ENCODE measurements at regions of chr14 and their contacts with region 1.

Region 1: GRCh38 chr14:31207755-31208545 is at the start of gene HECTD1:
- DNase-seq: peak; percentile 93
- ATAC-seq: peak; percentile 86
- H3K4me3 ChIP-seq: peak within 1 kb of the TSS; percentile 89 to 96 (median 95)
- H3K27ac ChIP-seq: peak within 1 kb of the TSS; percentile 94
- H3K4me1 ChIP-seq: peaks cover 35% of the 10 kb centered on the region
- H3K27me3 ChIP-seq: no peaks in the 10 kb centered on the region; a peak in 1 of 5 replicates
- CTCF ChIP-seq: peak; percentile 87
- EP300 ChIP-seq: peak; percentile 52 to 68
- POLR2A ChIP-seq: peak in 1 of 2 experiments; percentile 97; a peak in 2 of 4 replicates
- RAD21 ChIP-seq: peak; percentile 100
- total RNA-seq, gene HECTD1: 560 and 761 TPM in 2 replicates

Region 2: GRCh38 chr14:31154956-31155355 is 53.0 kb before region 1 on chr14:
- CTCF ChIA-PET with region 1: no interaction called
- POLR2A ChIA-PET with region 1: no interaction called
- in situ Hi-C with region 1: no loop called
- intact Hi-C with region 1: no loop called
- DNase-seq: no peak
- ATAC-seq: no peak
- H3K4me3 ChIP-seq: no peak overlapping the region
- H3K27ac ChIP-seq: no peak overlapping the region
- H3K4me1 ChIP-seq: no peaks in the 10 kb centered on the region
- H3K27me3 ChIP-seq: no peaks in the 10 kb centered on the region
- CTCF ChIP-seq: no peak
- EP300 ChIP-seq: no peak
- POLR2A ChIP-seq: no peak
- RAD21 ChIP-seq: no peak

Region 3: DNA sequence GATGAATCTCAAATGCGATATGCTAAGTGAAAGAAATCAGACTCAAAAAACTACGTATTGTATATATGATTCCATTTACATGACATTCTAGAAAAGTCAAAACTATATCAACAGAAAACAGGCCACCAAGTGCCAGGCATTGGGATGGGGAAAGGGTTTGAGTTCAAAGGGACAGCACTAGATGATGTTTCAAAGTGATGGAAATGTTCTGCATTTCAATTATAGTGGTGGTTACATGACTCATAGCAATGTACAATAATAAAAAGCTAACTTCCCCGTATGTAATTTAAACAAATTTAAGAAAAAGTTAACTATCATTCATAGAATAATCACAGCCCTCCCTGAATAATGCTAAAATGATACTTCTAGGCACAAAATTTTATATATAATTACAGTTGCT is 13.9 kb before region 1 on chr14:
- CTCF ChIA-PET with region 1: interaction called, 3 read pairs
- POLR2A ChIA-PET with region 1: interaction called, 40 read pairs
- in situ Hi-C with region 1: no loop called
- intact Hi-C with region 1: no loop called
- DNase-seq: no peak
- ATAC-seq: no peak
- H3K4me3 ChIP-seq: no peak overlapping the region
- H3K27ac ChIP-seq: no peak overlapping the region
- H3K4me1 ChIP-seq: peaks cover 46% of the 10 kb centered on the region
- H3K27me3 ChIP-seq: no peaks in the 10 kb centered on the region
- CTCF ChIP-seq: no peak
- EP300 ChIP-seq: no peak
- POLR2A ChIP-seq: no peak
- RAD21 ChIP-seq: no peak

Region 4: DNA sequence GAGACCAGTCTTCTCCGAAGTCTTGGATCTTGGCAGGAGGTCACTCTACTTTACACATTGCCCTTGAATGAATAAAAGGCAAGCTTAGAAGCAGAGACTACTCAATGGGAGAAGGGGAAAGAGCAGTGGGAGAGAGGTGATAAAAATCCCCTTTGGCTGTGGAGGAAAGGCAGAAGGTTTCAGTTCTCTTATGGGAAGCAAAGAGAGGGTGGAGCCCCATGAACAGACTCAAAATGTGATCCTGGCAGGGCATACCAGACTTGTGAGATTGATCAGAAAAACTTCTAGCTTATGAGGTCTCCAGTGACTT is 49.2 kb after region 1 on chr14:
- CTCF ChIA-PET with region 1: interaction called, 7 read pairs
- POLR2A ChIA-PET with region 1: interaction called, 323 read pairs
- in situ Hi-C with region 1: loop called (anchors 5 kb)
- intact Hi-C with region 1: loop called (anchors 1 kb)
- DNase-seq: no peak
- ATAC-seq: no peak
- H3K4me3 ChIP-seq: no peak overlapping the region
- H3K27ac ChIP-seq: peak overlapping the region; percentile 89
- H3K4me1 ChIP-seq: peaks cover 96% of the 10 kb centered on the region
- H3K27me3 ChIP-seq: no peaks in the 10 kb centered on the region; a peak in 1 of 5 replicates
- CTCF ChIP-seq: no peak
- EP300 ChIP-seq: no peak
- POLR2A ChIP-seq: no peak
- RAD21 ChIP-seq: no peak

Region 5: GRCh38 chr14:31280871-31281220 is 72.9 kb after region 1 on chr14:
- CTCF ChIA-PET with region 1: interaction called, 13 read pairs
- POLR2A ChIA-PET with region 1: interaction called, 18 read pairs
- in situ Hi-C with region 1: no loop called
- intact Hi-C with region 1: loop called (anchors 1 kb)
- DNase-seq: no peak
- ATAC-seq: peak; percentile 9; the same call in 1 of the 3 replicates
- H3K4me3 ChIP-seq: no peak overlapping the region
- H3K27ac ChIP-seq: no peak overlapping the region
- H3K4me1 ChIP-seq: peaks cover 45% of the 10 kb centered on the region
- H3K27me3 ChIP-seq: no peaks in the 10 kb centered on the region
- CTCF ChIP-seq: no peak
- EP300 ChIP-seq: no peak
- POLR2A ChIP-seq: no peak
- RAD21 ChIP-seq: no peak

Region 6: GRCh38 chr14:31346097-31346496 is 138.1 kb after region 1 on chr14:
- CTCF ChIA-PET with region 1: no interaction called
- POLR2A ChIA-PET with region 1: interaction called, 31 read pairs
- in situ Hi-C with region 1: no loop called
- intact Hi-C with region 1: no loop called
- DNase-seq: no peak
- ATAC-seq: no peak
- H3K4me3 ChIP-seq: no peak overlapping the region
- H3K27ac ChIP-seq: no peak overlapping the region
- H3K4me1 ChIP-seq: peaks cover 5% of the 10 kb centered on the region
- H3K27me3 ChIP-seq: no peaks in the 10 kb centered on the region
- CTCF ChIP-seq: no peak
- EP300 ChIP-seq: no peak
- POLR2A ChIP-seq: no peak
- RAD21 ChIP-seq: no peak

Region 7: DNA sequence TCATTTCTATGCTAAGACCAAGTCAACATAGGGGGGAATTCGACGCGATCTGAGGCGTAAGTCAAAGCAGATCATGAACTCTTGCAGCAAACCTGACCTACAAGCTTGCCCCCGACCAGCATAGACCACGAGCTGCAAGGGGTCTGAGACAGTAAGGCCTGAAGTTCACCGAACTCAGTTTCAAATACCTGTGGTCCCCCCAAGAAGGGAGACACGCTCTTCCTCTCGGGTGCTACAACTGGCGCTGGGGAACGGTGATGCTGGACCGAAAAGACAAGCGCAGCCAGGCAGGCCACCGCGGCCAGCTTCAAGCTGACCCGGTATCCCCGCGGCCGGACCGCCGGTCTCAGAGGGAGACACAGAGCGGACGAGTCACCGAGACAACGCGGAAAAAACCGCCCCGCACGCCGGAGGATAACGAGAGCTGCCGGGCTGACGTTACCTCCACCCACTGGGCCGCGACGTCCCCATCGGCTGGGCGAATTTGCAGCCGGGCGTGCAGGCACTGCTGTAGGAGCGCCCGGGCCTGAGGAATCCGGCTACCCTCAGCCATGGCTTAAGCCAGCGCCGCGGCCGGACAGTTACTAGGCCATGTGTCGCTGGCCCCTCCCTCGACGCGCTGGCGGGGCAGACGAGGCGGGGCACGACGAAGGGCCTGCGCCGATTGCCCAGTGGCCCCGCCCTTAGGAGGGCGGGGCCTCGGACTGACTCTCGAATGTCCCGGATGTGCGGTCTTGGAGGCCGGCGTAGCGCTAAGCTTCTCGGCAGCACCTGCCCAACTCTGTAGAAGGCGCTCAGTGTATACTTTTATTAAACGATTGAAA is 249.1 kb after region 1 on chr14 and contains the start of gene DTD2:
- CTCF ChIA-PET with region 1: no interaction called
- POLR2A ChIA-PET with region 1: interaction called, 19 read pairs
- in situ Hi-C with region 1: no loop called
- intact Hi-C with region 1: loop called (anchors 5 kb)
- DNase-seq: peak; percentile 98
- ATAC-seq: peak; percentile 98
- H3K4me3 ChIP-seq: peak within 1 kb of the TSS; percentile 74 to 88 (median 84)
- H3K27ac ChIP-seq: peak within 1 kb of the TSS; percentile 87
- H3K4me1 ChIP-seq: peaks cover 21% of the 10 kb centered on the region
- H3K27me3 ChIP-seq: no peaks in the 10 kb centered on the region; a peak in 1 of 5 replicates
- CTCF ChIP-seq: no peak
- EP300 ChIP-seq: peak; percentile 22 to 60; a peak in 2 of 4 replicates
- POLR2A ChIP-seq: peak; percentile 98 to 99
- RAD21 ChIP-seq: peak; percentile 79
- total RNA-seq, gene DTD2: 49.8 and 68.8 TPM in 2 replicates

Measured in HepG2 (cell line).